ENCODE measurements at regions of chr15 and their contacts with region 1.

Region 1: DNA sequence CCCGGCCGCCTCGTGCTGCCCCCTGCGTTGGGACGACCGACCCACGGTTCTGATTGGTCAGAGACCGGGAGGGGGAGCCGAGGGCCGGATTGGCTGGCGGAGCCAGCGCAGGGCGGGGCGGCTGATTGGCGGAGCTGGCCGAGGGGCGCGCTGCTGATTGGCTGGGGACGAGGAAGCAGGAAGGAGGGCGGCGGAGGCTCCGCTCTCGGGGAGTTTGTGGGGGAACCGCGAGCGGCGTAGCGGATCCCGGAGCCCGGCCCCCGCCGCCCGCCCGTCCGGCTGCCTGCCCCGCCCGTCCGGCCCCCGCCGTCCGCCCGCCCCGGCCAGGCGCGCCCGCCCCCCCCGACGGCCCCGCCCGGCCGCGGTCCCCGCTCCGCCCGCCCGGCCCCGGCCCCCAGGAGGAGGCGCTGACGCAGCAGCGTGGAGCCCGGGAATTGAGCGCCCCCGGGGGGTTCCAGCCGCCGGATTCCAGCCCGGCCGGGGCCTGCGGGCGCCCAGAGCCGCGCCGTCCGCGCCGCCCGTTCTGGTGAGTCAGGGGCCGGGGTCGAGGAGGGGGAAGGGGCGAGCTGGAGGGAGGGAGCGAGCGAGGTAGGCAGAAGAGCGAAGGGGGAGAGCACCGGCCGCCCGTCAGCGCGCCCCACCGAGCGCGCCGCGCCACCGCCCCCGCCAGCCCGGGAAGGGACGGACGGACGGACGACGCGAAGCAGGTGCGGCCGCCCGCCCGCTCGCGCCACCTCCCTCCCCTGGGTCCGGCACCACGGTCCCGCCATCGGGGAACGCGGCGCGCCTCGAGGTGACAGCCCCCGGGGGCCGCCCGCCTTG is at the start of gene BAHD1:
- DNase-seq: peak; percentile 98
- ATAC-seq: peak; percentile 91 to 93
- total RNA-seq, gene BAHD1: 14.5 to 14.8 TPM

Region 2: DNA sequence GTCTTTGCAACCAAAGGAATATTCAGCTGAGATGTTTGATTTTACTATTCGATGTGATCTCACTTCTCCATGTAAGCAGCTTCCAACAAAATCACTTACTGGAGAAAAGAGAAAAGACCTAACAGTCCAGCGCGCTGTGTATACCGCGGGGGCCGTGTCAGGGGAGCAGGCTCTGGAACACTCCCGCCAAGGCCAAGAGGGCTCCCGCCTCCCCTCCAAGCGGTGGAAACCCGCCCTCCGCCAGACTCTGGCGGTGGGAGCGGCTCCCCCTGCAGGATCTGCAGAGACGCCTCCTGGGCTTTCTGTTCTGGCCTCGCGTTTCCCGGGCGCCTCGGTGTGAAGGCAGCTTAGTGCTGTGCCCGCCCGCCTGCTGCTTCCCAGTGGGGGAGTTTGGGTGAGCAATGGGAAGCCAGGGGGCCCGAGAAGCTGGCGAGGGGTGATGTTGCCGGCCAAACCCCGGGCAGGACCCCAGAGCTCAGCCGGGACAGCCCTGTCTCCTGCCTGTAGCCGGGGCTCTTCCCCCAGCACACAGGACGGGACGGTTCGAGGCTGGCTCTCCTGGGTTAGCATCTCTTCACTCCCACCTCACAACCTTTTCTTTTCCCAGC is 66.1 kb after region 1 on chr15:
- intact Hi-C with region 1: loop called in 1 of 2 experiments (anchors 10 kb)
- DNase-seq: peak; percentile 80
- ATAC-seq: peak; percentile 91 to 93

Region 3: DNA sequence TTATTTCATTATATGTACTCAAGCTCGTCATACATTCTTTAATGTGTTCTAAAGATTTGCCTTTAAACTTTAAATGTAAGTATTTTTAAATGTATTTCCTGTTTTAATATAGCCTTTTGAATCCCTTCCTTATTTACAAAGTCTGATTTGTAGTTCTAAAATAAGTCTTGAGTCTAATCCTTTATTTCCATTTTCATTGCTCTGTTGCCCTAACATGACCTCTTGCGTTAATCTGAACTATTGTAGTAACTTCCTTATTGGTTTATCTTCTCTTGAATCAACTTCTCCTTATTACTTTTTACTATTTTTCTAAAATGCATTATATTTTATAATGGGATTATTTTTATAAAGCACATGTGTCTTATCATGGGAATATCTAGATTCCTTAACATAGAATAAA is 177.1 kb after region 1 on chr15:
- intact Hi-C with region 1: no loop called
- DNase-seq: no peak
- ATAC-seq: no peak

Region 4: GRCh38 chr15:40640789-40641188 is 199.8 kb after region 1 on chr15:
- intact Hi-C with region 1: no loop called
- DNase-seq: no peak
- ATAC-seq: no peak